Mammary epithelial cell (primary cell): ENCODE measurements at regions of chr1 and their contacts with region 1.

Region 1: GRCh38 chr1:180415985-180416633 is 86.3 kb downstream of the ACBD6 start:
- DNase-seq: peak; percentile 8
- H3K4me3 ChIP-seq: no peak overlapping the region
- H3K27ac ChIP-seq: no peak overlapping the region
- H3K4me1 ChIP-seq: no peaks in the 10 kb centered on the region
- H3K27me3 ChIP-seq: no peaks in the 10 kb centered on the region
- CTCF ChIP-seq: peak; percentile 54 to 63

Region 2: DNA sequence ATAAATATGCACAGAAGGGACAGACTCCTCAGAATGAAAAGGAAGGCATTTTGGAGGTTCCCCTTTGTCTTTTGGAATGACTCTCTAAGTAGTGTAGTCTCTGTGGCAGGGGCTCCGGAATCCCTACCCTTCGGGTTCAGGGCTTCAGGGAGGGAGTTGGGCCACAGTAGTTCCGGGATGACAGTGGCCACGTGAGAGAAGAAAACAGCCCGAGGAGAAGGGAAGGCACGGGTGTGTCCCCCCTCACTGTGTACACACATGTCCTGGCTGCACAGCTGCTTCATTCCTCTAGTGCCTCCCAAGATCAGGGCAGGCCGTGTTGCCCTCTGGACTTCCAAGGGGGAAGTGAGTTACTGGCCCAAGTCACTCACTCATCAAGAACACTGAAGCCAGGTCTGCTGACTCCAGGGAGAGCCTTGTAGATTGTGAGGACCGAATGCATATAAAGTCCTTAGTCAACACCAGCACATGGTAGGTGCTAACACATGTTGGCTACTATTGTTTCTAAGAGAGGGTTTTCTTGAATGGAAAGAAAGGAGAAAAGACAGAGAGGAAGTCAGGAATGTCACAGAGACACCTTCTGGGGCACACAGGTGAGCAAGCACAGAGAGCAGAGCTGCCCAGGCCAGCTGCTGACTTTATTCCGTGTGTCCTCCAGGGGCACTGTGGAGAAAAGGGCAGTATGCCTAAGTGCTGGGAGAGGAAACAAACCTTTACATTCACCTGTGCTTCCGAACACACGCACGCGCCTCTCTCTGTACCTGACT is 146.2 kb before region 1 on chr1:
- CTCF ChIA-PET with region 1: no interaction called
- dilution Hi-C with region 1: no loop called
- in situ Hi-C with region 1: no loop called
- intact Hi-C with region 1: loop called (anchors 5 kb)
- DNase-seq: no peak
- H3K4me3 ChIP-seq: no peak overlapping the region
- H3K27ac ChIP-seq: no peak overlapping the region
- H3K4me1 ChIP-seq: peaks cover 5% of the 10 kb centered on the region
- H3K27me3 ChIP-seq: no peaks in the 10 kb centered on the region
- CTCF ChIP-seq: peak; percentile 61 to 62